ENCODE measurements at regions of chr7 and their contacts with region 1.

Region 1: DNA sequence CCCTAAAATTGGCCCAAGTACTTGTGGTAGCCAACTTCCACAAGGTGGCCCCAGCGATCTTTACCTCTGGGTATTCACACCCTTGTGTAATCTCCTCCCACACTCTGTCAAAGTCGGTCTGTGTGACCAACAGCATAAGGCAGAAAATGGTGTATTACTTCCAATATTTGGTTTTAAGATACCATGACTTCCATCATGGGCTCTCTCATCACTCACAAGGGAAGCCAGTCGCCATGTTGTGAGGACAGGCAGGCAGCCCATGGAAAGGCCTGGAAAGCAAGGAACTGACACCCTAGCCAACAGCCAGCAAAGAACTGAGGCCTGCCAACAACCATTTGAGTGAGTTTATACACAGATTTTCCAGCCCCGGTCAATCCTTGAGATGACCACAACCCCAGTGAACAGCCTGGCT is 91.0 kb upstream of the KMT2E start:
- DNase-seq: peak; percentile 95
- H3K4me3 ChIP-seq: no peak overlapping the region
- H3K27ac ChIP-seq: peak overlapping the region; percentile 50
- H3K4me1 ChIP-seq: peaks cover 15% of the 10 kb centered on the region
- H3K27me3 ChIP-seq: peaks cover 0 to 3% of the 10 kb centered on the region in 2 experiments
- CTCF ChIP-seq: peak; percentile 78 to 86
- POLR2A ChIP-seq: no peak

Region 2: DNA sequence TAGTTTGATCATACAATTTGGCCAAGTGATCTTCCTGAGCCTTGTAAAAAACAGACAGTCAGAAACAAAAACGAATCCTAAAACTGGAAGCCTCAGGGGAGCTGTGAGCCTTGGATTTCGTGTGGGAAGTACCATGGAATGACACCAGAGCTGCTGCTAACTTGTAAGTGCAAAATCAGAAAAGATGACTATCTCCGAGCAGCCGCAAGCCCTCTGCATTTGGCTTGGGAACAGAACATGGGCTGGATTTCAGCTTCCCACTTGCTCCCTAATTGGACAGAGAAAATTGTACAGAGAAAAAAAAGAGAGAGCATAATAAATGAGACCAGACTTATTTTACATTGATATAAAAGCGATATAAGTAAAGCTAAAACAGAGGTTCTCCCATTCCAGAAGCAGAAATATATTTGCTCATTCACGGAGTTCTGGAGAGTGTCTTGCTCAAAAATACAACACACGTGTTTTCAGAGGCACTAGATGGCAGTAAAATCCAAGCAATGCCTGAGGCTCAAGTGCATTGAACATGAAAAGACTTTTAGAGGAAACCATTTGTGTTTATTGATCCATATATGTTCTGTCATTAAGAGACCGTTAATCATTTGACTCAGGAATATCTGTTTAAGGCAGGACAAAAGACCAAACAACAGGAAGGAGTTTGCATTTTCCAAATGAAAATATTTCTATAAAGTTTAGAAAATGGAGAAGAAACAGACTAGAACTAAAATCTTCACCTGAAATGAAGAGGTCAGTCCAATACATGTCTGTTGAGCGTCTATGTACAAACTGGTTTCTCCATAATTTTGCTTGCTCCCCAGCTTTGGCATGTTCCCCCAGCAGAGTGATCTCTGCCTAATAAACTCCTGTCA is 1398.7 kb before region 1 on chr7:
- CTCF ChIA-PET with region 1: interaction called, 17 read pairs
- POLR2A ChIA-PET with region 1: no interaction called
- dilution Hi-C with region 1: no loop called
- intact Hi-C with region 1: loop called (anchors 10 kb)
- DNase-seq: peak; percentile 35
- H3K4me3 ChIP-seq: no peak overlapping the region
- H3K27ac ChIP-seq: no peak overlapping the region
- H3K4me1 ChIP-seq: no peaks in the 10 kb centered on the region
- H3K27me3 ChIP-seq: peaks cover 0 to 5% of the 10 kb centered on the region in 2 experiments
- CTCF ChIP-seq: peak in 1 of 2 donors; percentile 12
- POLR2A ChIP-seq: no peak

Region 3: DNA sequence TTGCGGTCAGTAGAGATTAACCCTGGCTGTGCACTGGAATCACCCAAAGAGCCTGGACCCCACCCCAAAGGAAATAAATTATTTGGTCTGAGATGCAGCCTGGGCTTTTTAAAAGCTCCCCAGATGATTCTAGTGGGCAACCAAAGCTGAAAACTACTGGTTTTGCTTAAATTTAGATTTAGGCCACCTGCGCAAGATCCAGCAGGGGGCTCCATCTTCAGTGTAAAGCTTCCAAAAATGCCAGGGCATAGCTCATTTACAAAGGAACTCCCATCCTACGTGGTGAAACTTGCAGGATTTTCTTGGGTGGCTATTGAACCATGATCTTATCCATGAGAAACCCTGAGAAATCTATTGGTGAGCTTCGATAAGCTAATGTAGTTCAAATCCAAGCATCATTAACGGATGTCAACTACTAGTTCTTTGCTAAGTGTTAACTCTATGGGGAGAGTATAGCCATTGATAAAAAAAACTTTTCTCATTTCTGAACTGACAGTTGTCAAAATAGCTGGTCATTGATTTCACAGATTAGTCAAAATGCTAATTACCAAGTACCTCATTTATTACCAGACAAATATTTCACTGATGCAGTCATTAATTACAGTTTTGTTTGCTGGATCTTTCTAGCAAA is 279.3 kb before region 1 on chr7:
- CTCF ChIA-PET with region 1: interaction called, 73 read pairs
- POLR2A ChIA-PET with region 1: no interaction called
- dilution Hi-C with region 1: no loop called
- intact Hi-C with region 1: loop called (anchors 1 kb)
- DNase-seq: peak; percentile 23
- H3K4me3 ChIP-seq: no peak overlapping the region
- H3K27ac ChIP-seq: no peak overlapping the region
- H3K4me1 ChIP-seq: no peaks in the 10 kb centered on the region
- H3K27me3 ChIP-seq: peaks cover 0 to 2% of the 10 kb centered on the region in 2 experiments
- CTCF ChIP-seq: peak; percentile 54 to 58
- POLR2A ChIP-seq: no peak

Region 4: DNA sequence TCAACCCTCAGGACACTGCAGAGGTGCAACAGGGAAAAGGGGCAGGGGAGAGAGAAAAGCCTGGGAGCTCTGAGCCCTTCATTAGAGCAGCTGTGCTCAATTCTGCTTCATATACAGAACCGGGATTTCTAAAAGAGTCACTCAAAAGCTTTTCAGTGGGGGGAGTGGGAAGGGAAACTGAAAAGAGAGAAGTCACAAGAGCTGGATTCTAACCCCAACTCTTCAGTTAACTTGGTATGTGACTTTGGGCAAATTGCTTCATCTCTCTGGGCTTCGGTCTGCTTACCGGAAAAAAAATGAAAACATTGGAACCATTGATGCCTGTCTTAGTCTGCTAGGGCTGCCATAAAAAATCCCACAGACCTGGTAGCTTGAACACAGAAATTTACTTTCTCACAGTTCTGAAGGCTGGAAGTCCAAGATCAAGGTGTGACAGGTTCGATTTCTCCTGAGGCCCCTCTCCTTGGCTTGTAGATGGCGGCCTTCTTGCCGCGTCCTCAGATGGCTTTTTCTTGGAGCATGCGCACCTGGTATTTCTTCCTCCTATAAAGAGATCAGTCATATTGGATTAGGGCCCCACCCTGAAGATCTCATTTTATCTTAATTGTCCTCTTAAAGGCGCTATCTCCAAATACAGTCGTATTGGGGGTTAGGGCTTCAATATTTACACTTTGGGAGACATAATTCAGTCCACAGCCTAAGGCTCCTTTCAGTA is 27.3 kb before region 1 on chr7:
- CTCF ChIA-PET with region 1: interaction called, 16 read pairs
- POLR2A ChIA-PET with region 1: no interaction called
- dilution Hi-C with region 1: no loop called
- intact Hi-C with region 1: no loop called
- DNase-seq: no peak
- H3K4me3 ChIP-seq: no peak overlapping the region
- H3K27ac ChIP-seq: no peak overlapping the region
- H3K4me1 ChIP-seq: no peaks in the 10 kb centered on the region
- H3K27me3 ChIP-seq: no peaks in the 10 kb centered on the region
- CTCF ChIP-seq: no peak
- POLR2A ChIP-seq: no peak

Region 5: GRCh38 chr7:104983578-104984539 is 60.8 kb after region 1 on chr7:
- CTCF ChIA-PET with region 1: interaction called, 72 read pairs
- POLR2A ChIA-PET with region 1: interaction called, 4 read pairs
- dilution Hi-C with region 1: no loop called
- intact Hi-C with region 1: loop called (anchors 1 kb)
- DNase-seq: peak; percentile 91
- H3K4me3 ChIP-seq: peak overlapping the region; percentile 34 to 71 (median 49)
- H3K27ac ChIP-seq: peak overlapping the region; percentile 98
- H3K4me1 ChIP-seq: peaks cover 56% of the 10 kb centered on the region
- H3K27me3 ChIP-seq: no peaks in the 10 kb centered on the region
- CTCF ChIP-seq: peak; percentile 26 to 64
- POLR2A ChIP-seq: peak; percentile 97

Region 6: DNA sequence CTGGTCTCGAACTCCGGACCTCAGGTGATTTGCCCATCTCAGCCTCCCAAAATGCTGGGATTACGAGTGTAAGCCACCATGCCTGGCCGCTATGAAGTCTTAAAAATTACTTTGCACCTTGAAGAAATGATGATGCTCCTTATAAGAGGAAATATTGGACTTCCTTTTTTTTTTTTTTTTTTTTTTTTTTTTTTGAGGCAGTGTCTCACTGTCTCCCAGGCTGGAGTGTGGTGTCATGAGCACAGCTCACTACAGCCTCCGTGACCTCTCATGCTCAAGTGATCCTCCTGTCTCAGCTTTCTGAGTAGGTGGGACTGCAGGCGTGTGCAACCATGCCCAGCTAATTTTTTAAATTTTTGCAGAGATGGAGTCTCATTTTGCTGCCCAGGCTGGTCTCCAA is 156.3 kb after region 1 on chr7:
- CTCF ChIA-PET with region 1: no interaction called
- POLR2A ChIA-PET with region 1: no interaction called
- dilution Hi-C with region 1: no loop called
- intact Hi-C with region 1: loop called (anchors 5 kb)
- DNase-seq: no peak
- H3K4me3 ChIP-seq: no peak overlapping the region
- H3K27ac ChIP-seq: no peak overlapping the region
- H3K4me1 ChIP-seq: no peaks in the 10 kb centered on the region
- H3K27me3 ChIP-seq: no peaks in the 10 kb centered on the region
- CTCF ChIP-seq: no peak
- POLR2A ChIP-seq: no peak

Region 7: GRCh38 chr7:105429746-105430612 is 507.0 kb after region 1 on chr7:
- CTCF ChIA-PET with region 1: interaction called, 6 read pairs
- POLR2A ChIA-PET with region 1: no interaction called
- dilution Hi-C with region 1: no loop called
- intact Hi-C with region 1: loop called (anchors 1 kb)
- DNase-seq: peak; percentile 83
- H3K4me3 ChIP-seq: no peak overlapping the region
- H3K27ac ChIP-seq: no peak overlapping the region
- H3K4me1 ChIP-seq: no peaks in the 10 kb centered on the region
- H3K27me3 ChIP-seq: no peaks in the 10 kb centered on the region
- CTCF ChIP-seq: peak; percentile 38 to 44
- POLR2A ChIP-seq: no peak